PC-9 (cell line): ENCODE measurements at regions of chr10 and their contacts with region 1.

Region 1: GRCh38 chr10:29746080-29746797 is 111.5 kb upstream of the SVIL start:
- DNase-seq: no peak
- H3K4me3 ChIP-seq: no peak overlapping the region
- H3K27ac ChIP-seq: no peak overlapping the region
- H3K4me1 ChIP-seq: no peaks in the 10 kb centered on the region
- H3K27me3 ChIP-seq: no peaks in the 10 kb centered on the region
- CTCF ChIP-seq: no peak

Region 2: DNA sequence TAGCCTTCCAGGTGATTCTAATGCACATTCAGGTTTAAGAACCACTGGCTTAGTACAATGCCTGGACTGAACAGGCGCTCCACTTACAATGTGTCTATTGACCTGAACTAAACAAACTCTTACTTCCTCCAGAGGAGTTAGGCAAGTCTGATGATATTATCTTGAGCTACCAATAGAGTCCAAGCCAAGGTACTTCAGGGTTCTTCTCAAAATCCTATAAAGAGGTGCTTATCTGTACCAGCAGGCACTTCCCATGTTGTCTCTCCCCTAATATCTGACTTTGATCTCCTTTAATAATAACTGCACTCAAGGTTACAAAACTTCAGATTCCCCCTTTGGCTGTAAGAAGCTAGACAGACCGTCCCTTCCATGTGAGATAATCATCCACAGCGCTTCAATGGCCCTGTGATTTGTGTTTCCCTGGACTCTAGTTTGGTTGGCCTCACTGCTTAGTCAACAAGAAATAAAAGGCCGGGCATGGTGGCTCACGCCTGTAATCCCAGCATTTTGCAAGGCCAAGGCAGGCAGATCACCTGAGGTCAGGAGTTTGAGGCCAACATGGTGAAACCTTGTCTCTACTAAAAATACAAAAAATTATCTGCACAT is 45.6 kb after region 1 on chr10:
- CTCF ChIA-PET with region 1: interaction called, 14 read pairs
- POLR2A ChIA-PET with region 1: no interaction called
- intact Hi-C with region 1: no loop called
- DNase-seq: no peak
- H3K4me3 ChIP-seq: no peak overlapping the region
- H3K27ac ChIP-seq: no peak overlapping the region
- H3K4me1 ChIP-seq: no peaks in the 10 kb centered on the region
- H3K27me3 ChIP-seq: no peaks in the 10 kb centered on the region
- CTCF ChIP-seq: no peak